GM12878 (cell line): ENCODE measurements at regions of chrX and their contacts with region 1.

Region 1: DNA sequence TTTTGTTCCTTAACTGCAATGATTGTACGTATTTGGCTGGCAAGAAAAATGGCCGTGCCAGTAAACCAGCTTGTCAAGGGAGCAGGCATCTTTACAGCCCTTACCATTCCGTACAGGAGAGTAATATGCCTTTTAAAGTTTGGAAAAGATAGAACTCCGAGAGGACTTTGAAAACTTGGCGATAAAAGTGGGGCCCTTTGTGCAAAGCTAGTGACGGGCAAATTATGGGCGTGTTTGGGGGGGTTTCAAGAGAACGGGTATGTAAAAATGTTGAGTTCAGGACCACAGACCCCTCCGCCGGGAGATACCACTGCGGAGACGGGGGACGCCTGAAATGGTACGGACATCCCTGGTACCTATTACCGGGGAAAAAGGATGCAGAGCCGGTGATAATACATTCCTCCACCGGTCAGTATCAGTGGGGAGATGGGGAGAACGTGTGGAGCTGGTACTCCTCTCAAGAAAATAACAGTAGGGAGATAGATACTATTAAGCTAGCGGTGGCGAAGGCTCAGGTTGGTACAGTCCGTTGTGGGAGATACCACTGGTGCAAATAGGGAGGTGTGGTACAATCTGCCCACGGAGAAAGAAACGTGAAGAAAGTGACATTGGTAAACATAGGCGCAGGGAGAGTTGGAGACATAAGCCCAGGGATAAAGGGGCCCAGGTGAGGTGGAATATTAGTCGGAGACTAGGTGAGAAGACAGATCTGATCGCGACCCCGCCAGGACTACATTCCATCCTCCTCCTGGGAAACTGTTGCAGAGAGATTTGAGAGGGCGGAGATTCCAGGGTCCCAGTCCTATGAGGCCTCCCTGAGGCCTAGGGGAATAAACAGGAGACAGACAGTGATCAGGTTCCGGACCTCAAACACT is 14.5 kb downstream of the SPACA5 start:
- DNase-seq: peak; percentile 62
- ATAC-seq: peak; percentile 83
- H3K4me3 ChIP-seq: peak overlapping the region; percentile 60
- H3K27ac ChIP-seq: peak overlapping the region; percentile 89
- H3K4me1 ChIP-seq: no peaks in the 10 kb centered on the region
- H3K27me3 ChIP-seq: no peaks in the 10 kb centered on the region
- CTCF ChIP-seq: no peak
- EP300 ChIP-seq: no peak
- POLR2A ChIP-seq: no peak
- RAD21 ChIP-seq: no peak

Region 2: DNA sequence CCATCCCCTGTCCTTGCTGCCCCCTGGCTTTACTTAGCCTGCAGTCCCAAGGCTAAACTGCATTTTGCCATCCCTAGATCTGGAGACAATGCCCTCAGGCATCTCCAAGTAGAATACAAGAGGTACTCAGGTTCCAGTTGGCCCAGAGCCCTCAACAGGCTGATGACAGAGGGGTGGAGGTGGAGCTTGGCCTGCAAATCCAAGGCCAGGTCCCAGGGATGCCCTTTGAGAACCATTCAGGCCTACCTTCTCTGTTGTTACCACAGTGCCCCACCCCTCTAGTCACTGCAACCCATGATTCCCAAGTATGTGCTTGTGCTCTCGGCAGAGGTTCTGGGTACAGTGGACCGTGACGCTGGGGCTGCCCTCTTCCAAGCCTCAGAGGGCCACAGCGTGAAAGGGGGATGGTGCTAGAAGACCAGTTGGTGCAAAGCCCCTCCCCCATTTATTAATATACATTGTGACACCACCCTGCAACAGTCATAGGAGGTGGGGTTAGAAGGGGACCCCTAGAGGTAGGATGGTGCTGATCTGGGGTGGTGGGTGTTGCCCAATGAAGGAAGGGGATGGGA is 834.1 kb before region 1 on chrX:
- CTCF ChIA-PET with region 1: no interaction called
- POLR2A ChIA-PET with region 1: no interaction called
- RAD21 ChIA-PET with region 1: no interaction called
- SMC1A ChIA-PET with region 1: no interaction called
- in situ Hi-C with region 1: loop called (anchors 5 kb)
- intact Hi-C with region 1: no loop called
- DNase-seq: no peak
- ATAC-seq: no peak
- H3K4me3 ChIP-seq: no peak overlapping the region
- H3K27ac ChIP-seq: no peak overlapping the region
- H3K4me1 ChIP-seq: no peaks in the 10 kb centered on the region; the same call in 1 of the 2 replicates
- H3K27me3 ChIP-seq: no peaks in the 10 kb centered on the region; a peak in 1 of 4 replicates
- CTCF ChIP-seq: no peak
- EP300 ChIP-seq: no peak
- POLR2A ChIP-seq: peak; percentile 39; the same call in 1 of the 2 replicates
- RAD21 ChIP-seq: no peak

Region 3: GRCh38 chrX:47560831-47561652 is 460.2 kb before region 1 on chrX and contains the start of gene ARAF:
- CTCF ChIA-PET with region 1: no interaction called
- POLR2A ChIA-PET with region 1: no interaction called
- RAD21 ChIA-PET with region 1: no interaction called
- SMC1A ChIA-PET with region 1: no interaction called
- in situ Hi-C with region 1: loop called (anchors 10 kb)
- intact Hi-C with region 1: loop called (anchors 5 kb)
- DNase-seq: peak; percentile 95
- ATAC-seq: peak; percentile 92
- H3K4me3 ChIP-seq: peak within 1 kb of the TSS; percentile 70
- H3K27ac ChIP-seq: peak within 1 kb of the TSS; percentile 63
- H3K4me1 ChIP-seq: no peaks in the 10 kb centered on the region; the same call in 1 of the 2 replicates
- H3K27me3 ChIP-seq: no peaks in the 10 kb centered on the region
- CTCF ChIP-seq: no peak
- EP300 ChIP-seq: no peak
- POLR2A ChIP-seq: peak; percentile 94
- RAD21 ChIP-seq: no peak
- polyA plus RNA-seq, gene ARAF: 5.0 to 13.3 TPM

Region 4: DNA sequence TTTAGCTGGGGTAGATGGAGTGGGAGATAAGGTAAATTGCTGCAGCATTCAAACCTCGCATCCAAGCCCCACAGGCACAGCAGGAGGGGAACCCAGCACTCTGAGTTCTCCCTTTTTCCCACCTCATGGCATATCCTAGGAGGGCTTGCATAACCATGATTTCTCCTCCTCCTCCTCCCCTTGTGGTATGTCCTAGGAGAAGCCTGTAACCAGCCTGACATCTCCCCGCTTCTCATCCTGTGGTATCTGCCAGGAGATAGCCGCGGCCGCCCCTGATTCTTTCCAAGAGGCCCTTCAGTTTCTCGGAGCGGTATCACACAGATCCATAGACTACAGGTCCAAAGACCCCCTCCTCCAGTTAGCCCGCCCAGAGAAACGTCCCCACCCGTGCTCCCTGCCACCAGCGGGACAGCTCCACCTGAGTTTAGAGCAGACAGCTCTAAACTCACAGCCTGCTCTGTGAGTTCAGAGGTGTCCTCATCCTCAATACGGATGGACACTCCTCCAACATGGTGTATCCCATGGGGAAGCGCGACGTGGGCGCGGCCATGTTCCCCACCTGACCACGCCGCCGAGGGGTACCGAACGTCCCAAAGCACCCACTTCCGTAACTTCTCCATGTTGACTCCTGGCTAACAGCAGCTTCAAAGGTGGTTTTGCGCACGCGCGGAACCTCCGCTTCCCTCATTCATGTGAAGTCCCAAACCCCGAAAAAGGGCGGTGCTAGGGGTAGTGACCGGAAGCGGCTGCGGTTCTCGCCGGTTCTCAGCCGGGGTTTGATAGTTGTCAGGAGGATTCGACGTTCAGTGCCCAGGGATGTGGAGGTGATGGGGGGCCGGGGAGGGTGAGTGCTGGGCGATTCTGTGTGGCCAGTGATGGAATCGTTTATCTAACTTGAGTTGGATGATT is 184.8 kb before region 1 on chrX and contains the start of gene ZNF81:
- CTCF ChIA-PET with region 1: interaction called, 65 read pairs
- POLR2A ChIA-PET with region 1: interaction called, 5 read pairs
- RAD21 ChIA-PET with region 1: interaction called, 4 read pairs
- SMC1A ChIA-PET with region 1: interaction called, 9 read pairs
- in situ Hi-C with region 1: loop called (anchors 5 kb)
- intact Hi-C with region 1: loop called (anchors 1 kb)
- DNase-seq: peak; percentile 91
- ATAC-seq: peak; percentile 97
- H3K4me3 ChIP-seq: peak within 1 kb of the TSS; percentile 66
- H3K27ac ChIP-seq: peak within 1 kb of the TSS; percentile 50
- H3K4me1 ChIP-seq: no peaks in the 10 kb centered on the region
- H3K27me3 ChIP-seq: no peaks in the 10 kb centered on the region
- CTCF ChIP-seq: no peak
- EP300 ChIP-seq: no peak
- POLR2A ChIP-seq: peak; percentile 85
- RAD21 ChIP-seq: no peak
- polyA plus RNA-seq, gene ZNF81: 3.4 to 4.3 TPM

Region 5: DNA sequence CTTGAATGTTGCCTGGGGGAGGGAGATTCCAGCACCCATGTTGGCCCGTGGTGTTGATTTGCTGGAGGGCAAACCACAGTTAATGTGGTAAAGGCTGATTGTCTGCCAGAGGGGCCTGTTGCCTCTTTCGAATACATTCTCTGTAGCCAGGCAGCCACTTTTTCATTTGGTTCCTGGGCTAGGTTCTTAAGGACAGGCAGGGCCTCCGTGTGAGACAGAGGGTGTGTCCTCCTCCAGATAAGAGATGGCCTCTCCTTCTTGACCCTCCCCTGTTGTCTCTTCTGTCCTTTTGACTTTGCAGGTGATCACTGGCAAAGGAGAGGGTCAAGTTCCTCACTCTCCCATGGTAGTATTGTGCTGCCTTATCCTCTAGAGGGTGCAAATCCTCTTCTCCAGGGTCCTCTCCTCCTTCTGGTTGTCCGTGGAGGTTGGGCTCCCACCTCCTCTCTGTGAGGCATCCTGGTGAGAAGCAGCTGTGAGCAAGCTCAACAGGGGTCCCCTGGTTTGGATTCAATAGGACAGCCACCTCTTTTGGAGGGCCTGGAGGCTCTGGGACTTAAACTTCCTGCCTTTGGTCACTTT is 62.4 kb before region 1 on chrX:
- CTCF ChIA-PET with region 1: interaction called, 6 read pairs
- POLR2A ChIA-PET with region 1: no interaction called
- RAD21 ChIA-PET with region 1: interaction called, 4 read pairs
- SMC1A ChIA-PET with region 1: no interaction called
- in situ Hi-C with region 1: no loop called
- intact Hi-C with region 1: loop called (anchors 2 kb)
- DNase-seq: no peak
- ATAC-seq: peak; percentile 73
- H3K4me3 ChIP-seq: no peak overlapping the region
- H3K27ac ChIP-seq: no peak overlapping the region
- H3K4me1 ChIP-seq: no peaks in the 10 kb centered on the region
- H3K27me3 ChIP-seq: no peaks in the 10 kb centered on the region
- CTCF ChIP-seq: peak; percentile 10 to 34 (median 33); a peak in 4 of 6 replicates
- EP300 ChIP-seq: no peak
- POLR2A ChIP-seq: no peak
- RAD21 ChIP-seq: peak; percentile 53